ENCODE measurements at regions of chr14 and their contacts with region 1.

Region 1: GRCh38 chr14:34035177-34035933 is 84.5 kb upstream of the EGLN3 start:
- DNase-seq: peak; percentile 95
- ATAC-seq: peak; percentile 93
- H3K4me3 ChIP-seq: peak overlapping the region; percentile 20 to 65 (median 24); a peak in 5 of 6 replicates
- H3K27ac ChIP-seq: peak overlapping the region; percentile 78
- H3K4me1 ChIP-seq: peaks cover 92% of the 10 kb centered on the region
- H3K27me3 ChIP-seq: no peaks in the 10 kb centered on the region
- CTCF ChIP-seq: peak; percentile 53
- EP300 ChIP-seq: peak in 1 of 2 experiments; percentile 84; a peak in 3 of 4 replicates
- POLR2A ChIP-seq: peak; percentile 59 to 60
- RAD21 ChIP-seq: no peak; the same call in 1 of the 2 replicates

Region 2: DNA sequence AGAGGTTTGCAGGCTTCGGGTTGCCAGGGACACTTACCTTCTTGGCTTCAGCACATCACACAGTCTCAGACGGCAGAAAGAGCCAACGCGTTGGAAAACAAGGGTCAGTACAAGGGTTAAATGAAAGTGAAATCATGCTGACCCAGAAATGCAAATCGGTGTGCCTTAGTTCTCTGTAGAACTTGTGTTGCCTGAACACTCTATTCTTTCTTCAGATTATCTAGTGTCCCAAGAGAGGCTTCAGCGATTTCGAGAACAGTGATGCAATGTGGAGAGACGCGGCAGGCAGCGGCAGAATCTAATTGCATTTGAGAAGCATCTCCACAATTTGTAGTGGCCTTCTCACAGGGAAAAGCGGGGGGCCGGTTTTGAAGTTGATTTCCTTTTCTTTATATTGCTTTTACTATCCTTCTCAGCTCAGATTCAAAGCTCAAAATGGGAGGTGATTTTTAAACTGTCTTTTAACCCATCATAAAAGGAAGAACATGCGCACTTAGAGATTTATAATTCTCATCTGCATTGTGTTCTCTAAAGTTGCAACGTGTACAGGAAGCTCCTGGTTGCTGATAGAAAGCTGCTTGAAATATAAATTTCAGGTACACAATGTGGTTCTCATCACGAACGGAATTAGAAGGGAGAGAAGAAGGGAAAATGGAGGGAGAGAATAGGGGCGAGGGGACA is 16.7 kb before region 1 on chr14:
- CTCF ChIA-PET with region 1: interaction called, 3 read pairs
- POLR2A ChIA-PET with region 1: interaction called, 72 read pairs
- in situ Hi-C with region 1: no loop called
- intact Hi-C with region 1: no loop called
- DNase-seq: no peak
- ATAC-seq: peak; percentile 22; the same call in 1 of the 3 replicates
- H3K4me3 ChIP-seq: no peak overlapping the region
- H3K27ac ChIP-seq: no peak overlapping the region
- H3K4me1 ChIP-seq: peaks cover 48% of the 10 kb centered on the region
- H3K27me3 ChIP-seq: no peaks in the 10 kb centered on the region
- CTCF ChIP-seq: no peak
- EP300 ChIP-seq: no peak
- POLR2A ChIP-seq: no peak
- RAD21 ChIP-seq: no peak

Region 3: GRCh38 chr14:34051966-34052657 is 16.8 kb after region 1 on chr14:
- CTCF ChIA-PET with region 1: no interaction called
- POLR2A ChIA-PET with region 1: interaction called, 19 read pairs
- in situ Hi-C with region 1: no loop called
- intact Hi-C with region 1: no loop called
- DNase-seq: peak; percentile 95
- ATAC-seq: peak; percentile 94
- H3K4me3 ChIP-seq: no peak overlapping the region; a peak in 1 of 6 replicates
- H3K27ac ChIP-seq: no peak overlapping the region
- H3K4me1 ChIP-seq: peaks cover 73% of the 10 kb centered on the region
- H3K27me3 ChIP-seq: peaks cover 0 to 2% of the 10 kb centered on the region in 2 experiments; a peak in 1 of 5 replicates
- CTCF ChIP-seq: no peak
- EP300 ChIP-seq: peak in 1 of 2 experiments; percentile 74; a peak in 1 of 4 replicates
- POLR2A ChIP-seq: peak in 1 of 2 experiments; percentile 72; a peak in 2 of 4 replicates
- RAD21 ChIP-seq: no peak

Region 4: GRCh38 chr14:34104489-34105397 is 69.4 kb after region 1 on chr14:
- CTCF ChIA-PET with region 1: no interaction called
- POLR2A ChIA-PET with region 1: no interaction called
- in situ Hi-C with region 1: no loop called
- intact Hi-C with region 1: no loop called
- DNase-seq: no peak
- ATAC-seq: peak; percentile 32; the same call in 2 of the 3 replicates
- H3K4me3 ChIP-seq: no peak overlapping the region
- H3K27ac ChIP-seq: no peak overlapping the region
- H3K4me1 ChIP-seq: peaks cover 24% of the 10 kb centered on the region
- H3K27me3 ChIP-seq: peaks cover 0 to 24% of the 10 kb centered on the region in 2 experiments; a peak in 2 of 5 replicates
- CTCF ChIP-seq: no peak
- EP300 ChIP-seq: no peak
- POLR2A ChIP-seq: no peak
- RAD21 ChIP-seq: no peak